Activated naive CD4-positive, alpha-beta T cell treated with anti-CD3 and anti-CD28 coated beads for 36 hours (primary cell): ENCODE measurements at regions of chr16 and their contacts with region 1.

Region 1: DNA sequence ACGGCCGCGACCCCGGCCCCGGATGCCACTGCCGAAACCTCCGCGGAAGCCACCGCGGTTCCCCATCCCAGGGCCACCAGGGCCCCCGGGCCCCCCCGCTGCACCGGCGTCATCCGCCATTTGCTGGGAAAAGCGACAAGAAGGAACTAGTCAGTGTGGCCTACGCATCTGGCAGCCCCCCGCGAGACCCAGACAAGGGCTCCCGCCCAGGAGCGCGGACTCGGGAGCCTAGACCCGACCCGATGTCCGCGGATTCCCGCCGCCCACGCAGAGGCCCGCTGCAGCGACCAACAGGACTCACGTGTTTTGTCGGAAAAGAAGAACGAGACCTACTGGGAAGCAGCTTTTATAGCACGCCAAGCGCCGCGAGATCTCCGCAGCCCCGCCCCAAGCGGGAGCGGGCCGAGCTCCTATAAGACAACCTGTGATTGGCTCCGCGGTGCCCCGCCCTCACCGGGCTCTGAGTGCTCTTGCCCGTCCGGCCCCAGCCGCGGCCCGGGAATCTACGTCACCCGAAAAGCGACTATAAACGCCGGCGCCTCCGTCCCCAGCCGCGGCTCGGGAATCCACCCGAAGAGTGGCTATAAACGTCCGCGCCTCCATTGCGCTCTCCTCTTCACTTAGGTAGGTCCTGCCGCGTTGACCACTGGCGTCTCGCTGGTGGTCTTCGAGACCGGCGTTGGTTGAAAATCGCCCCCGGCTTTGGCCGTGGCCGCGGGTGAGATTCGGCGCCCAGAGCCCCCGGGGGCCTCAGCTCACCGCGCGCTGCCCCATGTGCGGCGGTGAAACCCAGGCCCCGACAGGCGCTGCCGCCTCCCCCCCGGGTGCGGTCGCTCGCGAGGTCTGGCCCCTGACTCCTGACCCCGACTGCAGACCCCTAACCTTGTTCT is at the start of gene RPS2:
- DNase-seq: peak; percentile 99
- H3K4me3 Mint-ChIP-seq: peak within 1 kb of the TSS; percentile 97
- H3K27ac Mint-ChIP-seq: peak within 1 kb of the TSS; percentile 95
- H3K4me1 Mint-ChIP-seq: peaks cover 42% of the 10 kb centered on the region
- H3K27me3 Mint-ChIP-seq: no peaks in the 10 kb centered on the region
- total RNA-seq, gene RPS2: 7,042 to 7,057 TPM

Region 2: DNA sequence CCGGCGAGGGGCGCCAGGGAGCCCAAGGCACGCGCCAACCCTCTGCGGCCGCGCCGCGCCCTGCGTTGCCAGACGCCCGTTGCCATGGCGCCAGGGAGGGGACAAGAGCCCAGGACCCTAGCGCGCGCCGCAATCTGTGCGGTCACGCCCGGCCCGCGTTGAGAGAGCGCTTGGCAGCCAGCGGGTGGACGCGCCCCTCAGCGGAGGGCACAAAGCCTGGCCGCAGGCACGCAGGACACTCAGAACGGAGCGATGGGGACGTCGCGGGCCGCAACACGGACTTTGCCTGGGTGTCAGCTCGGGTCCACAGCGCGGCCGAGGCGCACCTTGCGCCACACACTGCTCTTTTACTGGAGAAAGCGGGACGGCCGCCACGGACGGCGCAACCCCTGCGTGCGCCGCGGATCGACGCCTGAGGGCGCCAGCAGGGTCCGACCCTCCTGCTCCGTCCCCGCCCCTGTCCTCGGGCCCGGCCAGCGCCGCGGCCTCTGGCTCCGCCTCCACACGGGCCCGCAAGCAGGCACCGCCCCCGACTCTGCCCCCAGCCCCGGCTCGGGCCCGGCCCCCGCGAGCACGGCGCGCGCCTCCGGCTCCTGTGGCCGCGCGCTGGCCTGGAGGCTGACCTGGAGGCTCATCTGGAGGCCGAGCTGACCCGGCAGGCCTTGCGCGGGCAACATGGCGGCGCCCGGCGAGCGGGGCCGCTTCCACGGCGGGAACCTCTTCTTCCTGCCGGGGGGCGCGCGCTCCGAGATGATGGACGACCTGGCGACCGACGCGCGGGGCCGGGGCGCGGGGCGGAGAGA is 19.0 kb after region 1 on chr16 and contains the start of gene GFER:
- CTCF ChIA-PET with region 1: no interaction called
- intact Hi-C with region 1: loop called (anchors 2 kb)
- DNase-seq: peak; percentile 74
- H3K4me3 Mint-ChIP-seq: peak within 1 kb of the TSS; percentile 80
- H3K27ac Mint-ChIP-seq: no peak within 1 kb of the TSS
- H3K4me1 Mint-ChIP-seq: peaks cover 10% of the 10 kb centered on the region
- H3K27me3 Mint-ChIP-seq: peaks cover 26% of the 10 kb centered on the region
- total RNA-seq, gene GFER: 29.8 to 30.1 TPM

Region 3: GRCh38 chr16:2009789-2010510 is 45.2 kb after region 1 on chr16 and contains the start of gene ZNF598:
- CTCF ChIA-PET with region 1: no interaction called
- intact Hi-C with region 1: loop called (anchors 2 kb)
- DNase-seq: peak; percentile 77
- H3K4me3 Mint-ChIP-seq: peak within 1 kb of the TSS; percentile 88
- H3K27ac Mint-ChIP-seq: peak within 1 kb of the TSS; percentile 89
- H3K4me1 Mint-ChIP-seq: peaks cover 39% of the 10 kb centered on the region
- H3K27me3 Mint-ChIP-seq: no peaks in the 10 kb centered on the region
- total RNA-seq, gene ZNF598: 88.8 to 93.5 TPM